Activated CD4-positive, alpha-beta memory T cell treated with anti-CD3 and anti-CD28 coated beads, Interleukin-2, amount 10 ng/mL, durations not matched to agents 7 days and 5 days (primary cell): ENCODE measurements at regions of chr4 and their contacts with region 1.

Region 1: GRCh38 chr4:184649026-184649970 is at the starts of genes CASP3 and PRIMPOL:
- DNase-seq: peak; percentile 97
- H3K4me3 Mint-ChIP-seq: peak within 1 kb of the TSS; percentile 91
- H3K27ac Mint-ChIP-seq: peak within 1 kb of the TSS; percentile 89
- H3K4me1 Mint-ChIP-seq: peaks cover 63% of the 10 kb centered on the region
- H3K27me3 Mint-ChIP-seq: no peaks in the 10 kb centered on the region
- total RNA-seq, gene CASP3: 71.4 to 77.1 TPM
- total RNA-seq, gene PRIMPOL: 19.2 to 23.4 TPM

Region 2: GRCh38 chr4:184514121-184514988 is 134.9 kb before region 1 on chr4:
- CTCF ChIA-PET with region 1: no interaction called
- POLR2A ChIA-PET with region 1: interaction called, 13 read pairs
- DNase-seq: peak; percentile 71
- H3K4me3 Mint-ChIP-seq: peak overlapping the region; percentile 32
- H3K27ac Mint-ChIP-seq: peak overlapping the region; percentile 89
- H3K4me1 Mint-ChIP-seq: peaks cover 47% of the 10 kb centered on the region
- H3K27me3 Mint-ChIP-seq: no peaks in the 10 kb centered on the region

Region 3: GRCh38 chr4:184635381-184635780 is 13.9 kb before region 1 on chr4:
- CTCF ChIA-PET with region 1: interaction called, 3 read pairs
- POLR2A ChIA-PET with region 1: interaction called, 12 read pairs
- DNase-seq: no peak
- H3K4me3 Mint-ChIP-seq: no peak overlapping the region
- H3K27ac Mint-ChIP-seq: no peak overlapping the region
- H3K4me1 Mint-ChIP-seq: peaks cover 35% of the 10 kb centered on the region
- H3K27me3 Mint-ChIP-seq: no peaks in the 10 kb centered on the region

Region 4: DNA sequence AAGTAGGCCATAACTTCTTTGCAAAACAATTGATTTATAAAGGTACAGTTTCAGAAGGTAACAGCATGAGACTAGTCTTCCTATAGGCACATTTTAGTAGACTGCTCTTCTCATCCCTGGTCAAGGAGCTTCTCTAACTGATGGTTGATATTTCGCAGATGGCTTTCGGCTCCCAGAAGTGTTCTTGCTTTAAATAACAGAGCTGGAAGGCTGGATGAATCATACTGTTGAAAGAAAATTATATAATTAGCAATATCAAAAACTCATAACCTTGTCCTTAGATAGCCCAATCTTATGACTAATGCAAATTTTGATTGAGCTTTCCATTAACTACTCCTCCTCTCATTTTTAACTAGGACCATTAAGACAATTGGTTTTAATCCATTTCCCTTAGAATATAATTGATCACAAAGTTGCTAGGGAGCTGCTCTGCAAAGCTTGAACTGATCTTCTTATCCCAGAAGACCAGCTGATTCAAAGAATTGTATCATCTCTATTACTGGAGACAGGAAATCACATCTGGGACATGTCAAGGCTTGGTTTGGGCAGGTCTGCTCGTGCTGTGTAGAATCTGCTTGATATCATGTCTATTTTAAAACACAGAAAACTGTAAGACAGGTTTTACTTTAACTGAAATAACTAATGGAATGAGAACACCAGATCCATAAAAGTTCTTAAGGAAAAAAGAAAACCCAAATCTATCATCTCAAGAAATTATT is 46.0 kb after region 1 on chr4:
- CTCF ChIA-PET with region 1: interaction called, 3 read pairs
- POLR2A ChIA-PET with region 1: interaction called, 11 read pairs
- DNase-seq: no peak
- H3K4me3 Mint-ChIP-seq: no peak overlapping the region
- H3K27ac Mint-ChIP-seq: peak overlapping the region; percentile 11
- H3K4me1 Mint-ChIP-seq: peaks cover 5% of the 10 kb centered on the region
- H3K27me3 Mint-ChIP-seq: no peaks in the 10 kb centered on the region